ENCODE measurements at regions of chr12 and their contacts with region 1.

Region 1: GRCh38 chr12:90770861-90771260 is 184.1 kb downstream of the CCER1 start:
- DNase-seq: no peak
- ATAC-seq: no peak
- H3K4me3 ChIP-seq: no peak overlapping the region
- H3K4me3 Mint-ChIP-seq: no peak overlapping the region
- H3K27ac ChIP-seq: no peak overlapping the region
- H3K27ac Mint-ChIP-seq: no peak overlapping the region
- H3K4me1 ChIP-seq: no peaks in the 10 kb centered on the region
- H3K4me1 Mint-ChIP-seq: no peaks in the 10 kb centered on the region
- H3K27me3 ChIP-seq: no peaks in the 10 kb centered on the region
- H3K27me3 Mint-ChIP-seq: no peaks in the 10 kb centered on the region
- CTCF ChIP-seq: no peak

Region 2: GRCh38 chr12:90836689-90837088 is 65.8 kb after region 1 on chr12:
- CTCF ChIA-PET with region 1: no interaction called
- POLR2A ChIA-PET with region 1: no interaction called
- intact Hi-C with region 1: loop called in 1 of 2 experiments (anchors 2 kb)
- DNase-seq: no peak
- ATAC-seq: no peak
- H3K4me3 ChIP-seq: no peak overlapping the region
- H3K4me3 Mint-ChIP-seq: no peak overlapping the region
- H3K27ac ChIP-seq: no peak overlapping the region
- H3K27ac Mint-ChIP-seq: no peak overlapping the region
- H3K4me1 ChIP-seq: no peaks in the 10 kb centered on the region
- H3K4me1 Mint-ChIP-seq: no peaks in the 10 kb centered on the region
- H3K27me3 ChIP-seq: no peaks in the 10 kb centered on the region
- H3K27me3 Mint-ChIP-seq: no peaks in the 10 kb centered on the region
- CTCF ChIP-seq: no peak

Measured in CD4-positive, alpha-beta T cell (primary cell).